CD8-positive, alpha-beta T cell (primary cell): ENCODE measurements at regions of chr11 and their contacts with region 1.

Region 1: DNA sequence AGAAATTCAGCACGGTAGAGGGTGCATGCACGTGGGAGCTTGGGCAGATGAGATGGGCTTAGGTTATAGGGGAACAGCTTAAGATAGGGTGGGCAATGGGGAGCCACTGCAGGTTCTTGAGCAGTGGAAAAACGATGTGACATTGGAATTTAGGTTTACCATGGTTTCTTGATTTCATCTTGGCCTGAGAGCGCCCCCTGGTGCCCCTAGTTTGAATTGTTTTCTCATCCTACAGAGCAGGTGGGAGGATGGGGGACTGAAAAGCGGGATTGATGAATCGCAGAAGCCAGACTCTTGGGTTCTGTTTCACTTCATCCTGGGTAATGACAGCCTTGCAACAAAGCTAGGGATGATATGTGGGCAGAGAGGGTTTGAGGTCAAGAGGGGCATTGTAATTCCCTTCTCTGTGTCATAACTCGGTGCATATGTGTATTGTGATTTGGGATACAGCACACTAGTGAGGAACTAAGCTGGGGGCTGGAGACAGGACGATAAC is 6.7 kb upstream of the MCAM start:
- DNase-seq: peak; percentile 65 to 88 (median 76)
- ATAC-seq: peak; percentile 18
- H3K4me3 ChIP-seq: no peak overlapping the region
- H3K4me3 Mint-ChIP-seq: no peak overlapping the region
- H3K27ac ChIP-seq: no peak overlapping the region
- H3K27ac Mint-ChIP-seq: no peak overlapping the region
- H3K4me1 ChIP-seq: peaks cover 11% of the 10 kb centered on the region
- H3K4me1 Mint-ChIP-seq: peaks cover 26% of the 10 kb centered on the region
- H3K27me3 ChIP-seq: peaks cover 0 to 2% of the 10 kb centered on the region in 2 experiments
- H3K27me3 Mint-ChIP-seq: peaks cover 1% of the 10 kb centered on the region
- CTCF ChIP-seq: peak; percentile 77

Region 2: DNA sequence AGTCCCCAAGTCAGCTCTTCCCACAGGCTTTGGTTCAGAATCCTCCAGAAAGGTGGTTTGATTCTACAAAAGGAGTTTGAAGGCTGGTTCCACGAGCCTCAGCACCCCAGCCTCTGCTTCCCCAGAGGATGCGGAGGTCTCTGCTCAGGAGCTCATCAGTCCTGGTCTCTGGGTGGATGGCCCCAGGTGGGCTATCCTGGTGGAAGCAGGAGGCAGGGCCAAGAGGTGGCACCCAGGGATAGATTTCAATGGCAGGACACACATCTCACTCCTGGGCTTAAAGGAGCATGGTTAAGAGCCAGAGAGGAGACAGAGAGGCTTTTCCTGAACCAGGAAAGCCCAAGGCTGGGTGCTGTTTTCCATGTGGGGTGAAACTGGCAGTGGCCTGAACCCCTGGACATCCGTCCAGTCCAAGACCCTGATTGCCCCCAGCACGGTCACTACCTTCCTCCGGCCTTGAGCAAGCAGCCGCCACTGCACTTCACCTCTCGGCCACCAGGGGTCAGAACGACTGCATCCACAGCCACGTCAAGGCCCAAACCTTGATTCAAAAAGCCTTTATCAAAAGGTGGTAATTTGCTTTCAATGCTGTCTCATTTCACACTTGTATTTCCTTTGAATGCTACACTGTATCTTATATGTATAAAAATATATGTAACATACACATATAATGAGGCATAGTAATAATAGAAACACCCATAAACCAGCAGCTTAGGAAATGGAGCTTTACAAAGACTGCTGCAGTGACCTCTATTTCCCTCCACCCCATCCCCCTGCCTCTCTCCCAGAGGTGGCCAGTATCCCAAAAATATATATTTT is 1479.7 kb before region 1 on chr11:
- CTCF ChIA-PET with region 1: no interaction called
- POLR2A ChIA-PET with region 1: no interaction called
- intact Hi-C with region 1: no loop called
- DNase-seq: peak; percentile 61 to 91 (median 84)
- ATAC-seq: peak; percentile 97
- H3K4me3 ChIP-seq: no peak overlapping the region
- H3K4me3 Mint-ChIP-seq: no peak overlapping the region
- H3K27ac ChIP-seq: no peak overlapping the region
- H3K27ac Mint-ChIP-seq: no peak overlapping the region
- H3K4me1 ChIP-seq: no peaks in the 10 kb centered on the region
- H3K4me1 Mint-ChIP-seq: peaks cover 4% of the 10 kb centered on the region
- H3K27me3 ChIP-seq: no peaks in the 10 kb centered on the region
- H3K27me3 Mint-ChIP-seq: no peaks in the 10 kb centered on the region
- CTCF ChIP-seq: peak; percentile 98

Region 3: GRCh38 chr11:119168471-119169281 is 154.9 kb before region 1 on chr11 and contains the start of gene NLRX1:
- CTCF ChIA-PET with region 1: interaction called, 7 read pairs
- POLR2A ChIA-PET with region 1: no interaction called
- intact Hi-C with region 1: loop called (anchors 1 kb)
- DNase-seq: peak; percentile 70 to 90 (median 81)
- ATAC-seq: peak; percentile 99
- H3K4me3 ChIP-seq: peak within 1 kb of the TSS; percentile 61 to 70
- H3K4me3 Mint-ChIP-seq: peak within 1 kb of the TSS; percentile 87
- H3K27ac ChIP-seq: peak within 1 kb of the TSS; percentile 60 to 69
- H3K27ac Mint-ChIP-seq: peak within 1 kb of the TSS; percentile 81
- H3K4me1 ChIP-seq: peaks cover 6% of the 10 kb centered on the region
- H3K4me1 Mint-ChIP-seq: no peaks in the 10 kb centered on the region
- H3K27me3 ChIP-seq: no peaks in the 10 kb centered on the region
- H3K27me3 Mint-ChIP-seq: no peaks in the 10 kb centered on the region
- CTCF ChIP-seq: peak; percentile 80
- total RNA-seq, gene NLRX1: 5.1 TPM

Region 4: GRCh38 chr11:119262668-119263351 is 60.8 kb before region 1 on chr11:
- CTCF ChIA-PET with region 1: interaction called, 14 read pairs
- POLR2A ChIA-PET with region 1: no interaction called
- intact Hi-C with region 1: no loop called
- DNase-seq: peak in 2 of 9 experiments; percentile 32 to 56
- ATAC-seq: peak; percentile 28
- H3K4me3 ChIP-seq: no peak overlapping the region
- H3K4me3 Mint-ChIP-seq: no peak overlapping the region
- H3K27ac ChIP-seq: peak overlapping the region in 1 of 2 experiments; percentile 77
- H3K27ac Mint-ChIP-seq: no peak overlapping the region
- H3K4me1 ChIP-seq: peaks cover 86% of the 10 kb centered on the region
- H3K4me1 Mint-ChIP-seq: peaks cover 50% of the 10 kb centered on the region
- H3K27me3 ChIP-seq: no peaks in the 10 kb centered on the region
- H3K27me3 Mint-ChIP-seq: no peaks in the 10 kb centered on the region
- CTCF ChIP-seq: no peak

Region 5: DNA sequence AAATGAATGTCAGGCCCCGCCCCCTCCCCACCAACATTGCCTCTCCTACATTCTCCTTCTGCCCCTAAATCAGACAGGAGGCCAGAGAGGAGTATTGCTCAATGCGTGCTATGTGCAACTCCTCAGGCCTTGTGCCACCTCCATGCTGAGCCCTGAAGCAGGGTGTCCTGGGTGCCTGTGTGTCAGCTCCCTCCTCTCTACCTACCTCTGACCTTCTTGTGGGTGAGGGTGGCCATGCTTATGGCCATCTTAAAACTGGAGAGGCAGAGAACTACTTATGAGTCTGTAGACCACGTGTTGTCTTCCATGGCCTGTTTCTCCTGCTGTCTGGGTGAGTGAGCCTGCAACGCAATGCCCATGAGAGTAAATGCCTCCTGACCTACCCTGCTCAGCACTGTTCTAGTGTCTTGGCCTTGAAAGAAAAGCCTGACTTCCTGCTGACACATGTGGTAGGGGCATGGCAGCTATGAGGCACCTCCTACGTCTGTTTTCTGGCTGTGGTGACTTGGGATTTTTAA is 17.2 kb before region 1 on chr11:
- CTCF ChIA-PET with region 1: interaction called, 35 read pairs
- POLR2A ChIA-PET with region 1: interaction called, 3 read pairs
- intact Hi-C with region 1: loop called in 1 of 2 experiments (anchors 1 kb)
- DNase-seq: peak in 4 of 9 experiments; percentile 61 to 83 (median 72)
- ATAC-seq: peak; percentile 95
- H3K4me3 ChIP-seq: no peak overlapping the region
- H3K4me3 Mint-ChIP-seq: peak overlapping the region; percentile 74
- H3K27ac ChIP-seq: peak overlapping the region; percentile 32 to 42
- H3K27ac Mint-ChIP-seq: peak overlapping the region; percentile 99
- H3K4me1 ChIP-seq: peaks cover 30% of the 10 kb centered on the region
- H3K4me1 Mint-ChIP-seq: peaks cover 35% of the 10 kb centered on the region
- H3K27me3 ChIP-seq: no peaks in the 10 kb centered on the region
- H3K27me3 Mint-ChIP-seq: no peaks in the 10 kb centered on the region
- CTCF ChIP-seq: no peak

Region 6: GRCh38 chr11:119334174-119334930 is 10.8 kb after region 1 on chr11 and contains the start of gene RNF26:
- CTCF ChIA-PET with region 1: interaction called, 103 read pairs
- POLR2A ChIA-PET with region 1: interaction called, 3 read pairs
- intact Hi-C with region 1: loop called in 1 of 2 experiments (anchors 2 kb)
- DNase-seq: peak; percentile 88 to 98 (median 93)
- ATAC-seq: peak; percentile 95
- H3K4me3 ChIP-seq: peak within 1 kb of the TSS; percentile 77 to 98
- H3K4me3 Mint-ChIP-seq: peak within 1 kb of the TSS; percentile 98
- H3K27ac ChIP-seq: peak within 1 kb of the TSS; percentile 68 to 86
- H3K27ac Mint-ChIP-seq: peak within 1 kb of the TSS; percentile 97
- H3K4me1 ChIP-seq: peaks cover 13% of the 10 kb centered on the region
- H3K4me1 Mint-ChIP-seq: peaks cover 27% of the 10 kb centered on the region
- H3K27me3 ChIP-seq: peaks cover 10 to 11% of the 10 kb centered on the region in 2 experiments
- H3K27me3 Mint-ChIP-seq: peaks cover 12% of the 10 kb centered on the region
- CTCF ChIP-seq: no peak
- total RNA-seq, gene RNF26: 20.9 TPM

Region 7: DNA sequence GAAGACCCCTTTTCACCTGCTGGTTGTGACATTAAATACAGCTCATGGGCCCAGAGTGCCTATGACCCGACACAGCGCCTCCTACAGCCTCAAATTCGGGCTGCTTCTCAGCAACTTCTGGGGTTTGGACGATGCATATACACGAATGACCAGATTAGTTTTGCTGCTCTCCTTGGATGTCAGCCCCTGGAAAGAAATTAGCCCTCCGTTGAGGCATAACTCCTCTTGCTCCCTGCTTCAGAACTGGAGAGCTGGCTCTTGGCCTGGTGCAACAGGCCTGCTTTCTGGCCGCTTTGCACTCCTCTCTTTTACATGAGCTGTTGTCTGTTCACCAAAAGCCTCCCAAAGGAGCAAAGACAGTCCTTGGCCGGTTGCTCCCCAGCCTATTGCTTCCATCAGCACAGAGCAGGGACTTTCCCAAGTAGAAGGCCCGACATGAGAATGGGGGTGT is 1780.8 kb after region 1 on chr11:
- CTCF ChIA-PET with region 1: no interaction called
- POLR2A ChIA-PET with region 1: no interaction called
- intact Hi-C with region 1: no loop called
- DNase-seq: no peak
- ATAC-seq: no peak
- H3K4me3 ChIP-seq: no peak overlapping the region
- H3K4me3 Mint-ChIP-seq: no peak overlapping the region
- H3K27ac ChIP-seq: no peak overlapping the region
- H3K27ac Mint-ChIP-seq: no peak overlapping the region
- H3K4me1 ChIP-seq: no peaks in the 10 kb centered on the region
- H3K4me1 Mint-ChIP-seq: no peaks in the 10 kb centered on the region
- H3K27me3 ChIP-seq: peaks cover 0 to 4% of the 10 kb centered on the region in 2 experiments
- H3K27me3 Mint-ChIP-seq: no peaks in the 10 kb centered on the region
- CTCF ChIP-seq: no peak